ENCODE measurements at regions of chr17 and their contacts with region 1.

Region 1: DNA sequence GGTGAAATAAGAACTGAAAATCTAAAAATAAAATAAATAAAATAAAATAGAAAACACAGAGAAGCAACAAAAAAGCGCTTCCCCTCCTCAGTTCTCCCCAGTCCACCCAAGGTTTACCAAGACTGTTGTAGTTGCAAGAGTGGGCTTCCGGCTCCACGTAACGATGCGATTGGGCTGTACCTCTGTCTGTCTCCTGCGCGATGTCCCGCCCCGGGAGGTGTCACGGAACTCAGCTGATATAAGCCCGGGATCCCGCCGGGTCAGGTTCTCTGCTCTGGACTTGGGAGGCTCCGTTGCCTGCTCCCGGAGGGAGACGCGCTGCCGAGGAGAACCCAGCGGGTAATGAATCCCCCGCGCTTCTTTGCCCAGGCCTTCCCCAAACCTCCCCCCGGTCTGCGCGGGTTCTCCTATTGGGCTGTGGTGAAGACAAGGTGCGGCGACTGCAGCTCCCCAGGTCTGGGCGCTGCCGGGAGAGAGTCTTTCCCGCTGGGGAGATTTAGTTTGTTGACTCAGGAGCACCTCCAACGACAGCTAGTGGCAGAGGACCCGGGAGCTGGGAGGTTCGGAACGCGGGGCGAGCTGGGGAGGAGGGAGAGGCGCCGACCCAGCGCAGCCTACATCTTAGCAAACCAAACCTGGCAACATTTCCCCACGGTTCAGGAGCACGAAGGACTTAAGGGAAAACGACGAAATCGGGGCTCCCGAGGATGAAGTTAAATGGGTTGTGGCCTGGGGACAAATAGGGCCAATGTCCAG is at the start of gene SLFN5:
- DNase-seq: peak; percentile 90
- ATAC-seq: peak; percentile 80
- H3K4me3 ChIP-seq: peak within 1 kb of the TSS; percentile 74 to 98 (median 92)
- H3K4me3 Mint-ChIP-seq: peak within 1 kb of the TSS; percentile 99
- H3K27ac ChIP-seq: peak within 1 kb of the TSS; percentile 75 to 79
- H3K27ac Mint-ChIP-seq: peak within 1 kb of the TSS; percentile 97
- H3K4me1 ChIP-seq: peaks cover 23 to 27% of the 10 kb centered on the region in 2 donors
- H3K4me1 Mint-ChIP-seq: peaks cover 30% of the 10 kb centered on the region
- H3K27me3 ChIP-seq: no peaks in the 10 kb centered on the region
- H3K27me3 Mint-ChIP-seq: peaks cover 4% of the 10 kb centered on the region
- CTCF ChIP-seq: no peak
- total RNA-seq, gene SLFN5: 11.1 and 12.5 TPM in 2 replicates

Region 2: GRCh38 chr17:34980681-34981537 is 262.1 kb before region 1 on chr17:
- CTCF ChIA-PET with region 1: no interaction called
- POLR2A ChIA-PET with region 1: no interaction called
- intact Hi-C with region 1: loop called (anchors 5 kb)
- DNase-seq: peak; percentile 88
- ATAC-seq: peak; percentile 91
- H3K4me3 ChIP-seq: peak overlapping the region; percentile 8 to 98 (median 93)
- H3K4me3 Mint-ChIP-seq: peak overlapping the region; percentile 98
- H3K27ac ChIP-seq: peak overlapping the region; percentile 95 to 99
- H3K27ac Mint-ChIP-seq: peak overlapping the region; percentile 97
- H3K4me1 ChIP-seq: peaks cover 15 to 16% of the 10 kb centered on the region in 2 donors
- H3K4me1 Mint-ChIP-seq: peaks cover 28% of the 10 kb centered on the region
- H3K27me3 ChIP-seq: no peaks in the 10 kb centered on the region
- H3K27me3 Mint-ChIP-seq: no peaks in the 10 kb centered on the region
- CTCF ChIP-seq: peak; percentile 63

Region 3: DNA sequence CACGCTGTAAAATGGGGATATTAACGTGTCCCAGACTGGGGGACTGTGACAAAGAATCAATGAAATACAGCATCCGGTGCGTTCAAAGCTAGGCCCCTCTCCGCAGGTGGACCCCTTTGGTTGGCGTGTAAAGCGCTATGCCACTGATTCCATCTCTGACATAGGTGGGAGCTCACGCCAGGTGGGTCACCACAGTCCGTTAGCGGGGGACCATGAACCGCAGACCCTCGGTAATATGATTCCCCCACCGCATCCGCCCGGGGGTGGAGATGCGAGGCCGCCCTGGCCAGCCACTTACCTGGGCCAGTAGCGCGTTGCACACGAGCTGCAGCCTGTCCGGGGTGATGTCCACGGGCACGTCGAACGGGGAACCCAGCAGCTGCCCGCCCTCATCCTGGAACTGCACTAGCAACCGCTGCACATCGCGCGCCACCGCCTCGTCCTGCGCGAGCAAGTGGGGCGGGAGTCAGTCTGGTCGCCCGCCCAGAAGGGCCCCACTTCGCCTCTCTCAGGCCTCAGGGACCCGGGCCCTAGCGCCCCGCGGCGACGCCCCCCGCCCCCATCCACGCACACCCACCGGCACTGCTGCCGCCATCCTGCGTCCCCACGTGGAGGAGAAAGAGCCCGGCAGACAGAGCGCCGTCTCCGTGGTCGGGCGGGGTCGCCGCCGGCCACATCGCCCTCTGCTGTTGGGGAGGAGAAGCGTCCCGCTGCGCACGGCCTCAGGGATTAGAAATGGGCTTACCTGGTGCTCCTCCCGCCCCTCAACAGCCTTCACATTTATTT is 101.1 kb before region 1 on chr17 and contains the start of gene NLE1:
- CTCF ChIA-PET with region 1: no interaction called
- POLR2A ChIA-PET with region 1: no interaction called
- intact Hi-C with region 1: loop called (anchors 1 kb)
- DNase-seq: peak; percentile 89
- ATAC-seq: peak; percentile 98
- H3K4me3 ChIP-seq: peak within 1 kb of the TSS; percentile 73 to 93 (median 84)
- H3K4me3 Mint-ChIP-seq: peak within 1 kb of the TSS; percentile 87
- H3K27ac ChIP-seq: peak within 1 kb of the TSS in 1 of 2 donors; percentile 64
- H3K27ac Mint-ChIP-seq: peak within 1 kb of the TSS; percentile 56
- H3K4me1 ChIP-seq: peaks cover 5 to 11% of the 10 kb centered on the region in 2 donors
- H3K4me1 Mint-ChIP-seq: peaks cover 20% of the 10 kb centered on the region
- H3K27me3 ChIP-seq: no peaks in the 10 kb centered on the region
- H3K27me3 Mint-ChIP-seq: no peaks in the 10 kb centered on the region
- CTCF ChIP-seq: peak; percentile 95
- total RNA-seq, gene NLE1: 13.7 and 17.5 TPM in 2 replicates

Region 4: DNA sequence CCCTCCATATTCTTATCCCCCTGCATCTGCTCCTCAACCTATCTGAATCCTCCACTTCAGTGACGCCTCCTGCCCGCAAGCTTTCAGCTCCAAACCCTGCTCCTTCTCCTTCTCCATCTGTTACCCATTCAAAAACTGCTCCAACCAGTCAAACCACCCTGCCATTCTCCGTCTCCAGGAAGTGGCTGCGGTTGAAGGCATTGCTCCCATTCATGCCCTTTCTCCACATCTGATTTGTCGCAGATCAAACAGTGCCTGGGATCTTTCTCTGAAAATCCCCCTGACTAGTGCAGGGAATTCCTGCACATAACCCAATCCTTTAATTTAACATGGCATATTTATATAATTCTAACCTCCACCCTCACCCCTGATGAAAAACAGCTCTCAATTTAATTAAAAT is 56.1 kb after region 1 on chr17:
- CTCF ChIA-PET with region 1: no interaction called
- POLR2A ChIA-PET with region 1: no interaction called
- intact Hi-C with region 1: no loop called
- DNase-seq: no peak
- ATAC-seq: no peak
- H3K4me3 ChIP-seq: no peak overlapping the region
- H3K4me3 Mint-ChIP-seq: no peak overlapping the region
- H3K27ac ChIP-seq: no peak overlapping the region
- H3K27ac Mint-ChIP-seq: no peak overlapping the region
- H3K4me1 ChIP-seq: no peaks in the 10 kb centered on the region
- H3K4me1 Mint-ChIP-seq: no peaks in the 10 kb centered on the region
- H3K27me3 ChIP-seq: peaks cover 0 to 19% (median 2%) of the 10 kb centered on the region in 4 experiments
- H3K27me3 Mint-ChIP-seq: peaks cover 35% of the 10 kb centered on the region
- CTCF ChIP-seq: no peak

Region 5: GRCh38 chr17:35368081-35368830 is 125.3 kb after region 1 on chr17:
- CTCF ChIA-PET with region 1: no interaction called
- POLR2A ChIA-PET with region 1: no interaction called
- intact Hi-C with region 1: loop called (anchors 2 kb)
- DNase-seq: peak; percentile 88
- ATAC-seq: peak; percentile 100
- H3K4me3 ChIP-seq: peak overlapping the region in 4 of 5 experiments; percentile 3 to 53 (median 34)
- H3K4me3 Mint-ChIP-seq: peak overlapping the region; percentile 75
- H3K27ac ChIP-seq: peak overlapping the region; percentile 33 to 67
- H3K27ac Mint-ChIP-seq: peak overlapping the region; percentile 88
- H3K4me1 ChIP-seq: peaks cover 22 to 27% of the 10 kb centered on the region in 2 donors
- H3K4me1 Mint-ChIP-seq: peaks cover 58% of the 10 kb centered on the region
- H3K27me3 ChIP-seq: no peaks in the 10 kb centered on the region
- H3K27me3 Mint-ChIP-seq: no peaks in the 10 kb centered on the region
- CTCF ChIP-seq: no peak

Region 6: GRCh38 chr17:35448214-35448898 is 205.4 kb after region 1 on chr17 and contains the start of gene SLFN13:
- CTCF ChIA-PET with region 1: no interaction called
- POLR2A ChIA-PET with region 1: no interaction called
- intact Hi-C with region 1: loop called (anchors 5 kb)
- DNase-seq: peak; percentile 87
- ATAC-seq: peak; percentile 84
- H3K4me3 ChIP-seq: peak within 1 kb of the TSS; percentile 48 to 90 (median 83)
- H3K4me3 Mint-ChIP-seq: peak within 1 kb of the TSS; percentile 93
- H3K27ac ChIP-seq: peak within 1 kb of the TSS; percentile 79 to 84
- H3K27ac Mint-ChIP-seq: peak within 1 kb of the TSS; percentile 87
- H3K4me1 ChIP-seq: peaks cover 14 to 26% of the 10 kb centered on the region in 2 donors
- H3K4me1 Mint-ChIP-seq: peaks cover 25% of the 10 kb centered on the region
- H3K27me3 ChIP-seq: no peaks in the 10 kb centered on the region
- H3K27me3 Mint-ChIP-seq: no peaks in the 10 kb centered on the region
- CTCF ChIP-seq: no peak
- total RNA-seq, gene SLFN13: 30.9 and 31.0 TPM in 2 replicates

Region 7: GRCh38 chr17:35568541-35568940 is 325.6 kb after region 1 on chr17:
- CTCF ChIA-PET with region 1: no interaction called
- POLR2A ChIA-PET with region 1: no interaction called
- intact Hi-C with region 1: loop called (anchors 5 kb)
- DNase-seq: no peak
- ATAC-seq: no peak
- H3K4me3 ChIP-seq: peak overlapping the region; percentile 76 to 98 (median 91)
- H3K4me3 Mint-ChIP-seq: peak overlapping the region; percentile 99
- H3K27ac ChIP-seq: peak overlapping the region in 1 of 2 donors; percentile 84
- H3K27ac Mint-ChIP-seq: peak overlapping the region; percentile 95
- H3K4me1 ChIP-seq: peaks cover 14 to 16% of the 10 kb centered on the region in 2 donors
- H3K4me1 Mint-ChIP-seq: peaks cover 23% of the 10 kb centered on the region
- H3K27me3 ChIP-seq: no peaks in the 10 kb centered on the region
- H3K27me3 Mint-ChIP-seq: peaks cover 2% of the 10 kb centered on the region
- CTCF ChIP-seq: no peak

Measured in B cell (primary cell).